Endothelial cell of umbilical vein (primary cell): ENCODE measurements at regions of chr12 and their contacts with region 1.

Region 1: DNA sequence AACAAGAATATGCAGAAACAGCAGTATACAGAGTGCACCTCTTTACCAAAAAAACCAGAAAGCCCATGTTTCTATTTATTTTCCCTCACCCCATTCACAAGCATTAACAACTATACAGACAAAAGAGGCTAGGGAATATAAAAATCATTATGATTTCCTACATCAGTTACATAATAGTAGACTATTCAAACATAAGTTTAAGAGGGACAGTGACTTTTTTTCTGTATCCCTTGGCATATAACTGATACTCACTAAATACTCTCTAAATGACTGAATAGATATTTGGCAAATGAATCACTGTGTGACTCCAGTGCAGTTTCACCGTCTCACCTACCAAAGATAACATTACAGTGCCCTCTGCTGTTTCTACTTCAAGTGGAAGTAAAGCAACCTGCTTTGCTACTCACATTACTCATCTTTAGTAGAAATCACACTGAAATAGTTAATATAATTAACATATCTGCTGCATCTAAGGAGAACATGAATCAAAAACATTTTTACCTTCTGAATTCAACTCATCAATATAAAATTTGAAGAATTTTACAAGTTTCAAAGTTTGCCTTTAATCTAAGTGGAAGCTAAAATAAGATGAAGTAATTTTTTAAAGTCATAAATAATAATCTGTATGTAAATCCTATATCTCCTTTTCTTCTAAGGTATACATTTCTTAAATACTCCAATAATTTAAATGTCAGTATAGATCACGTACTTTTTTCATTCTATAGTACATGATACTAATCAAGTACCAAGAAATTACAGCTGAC is 103.8 kb downstream of the OSBPL8 start:
- DNase-seq: peak; percentile 82
- H3K4me3 ChIP-seq: no peak overlapping the region
- H3K27ac ChIP-seq: peak overlapping the region; percentile 48
- H3K4me1 ChIP-seq: peaks cover 9% of the 10 kb centered on the region
- H3K27me3 ChIP-seq: no peaks in the 10 kb centered on the region
- CTCF ChIP-seq: peak; percentile 48 to 54
- POLR2A ChIP-seq: no peak

Region 2: DNA sequence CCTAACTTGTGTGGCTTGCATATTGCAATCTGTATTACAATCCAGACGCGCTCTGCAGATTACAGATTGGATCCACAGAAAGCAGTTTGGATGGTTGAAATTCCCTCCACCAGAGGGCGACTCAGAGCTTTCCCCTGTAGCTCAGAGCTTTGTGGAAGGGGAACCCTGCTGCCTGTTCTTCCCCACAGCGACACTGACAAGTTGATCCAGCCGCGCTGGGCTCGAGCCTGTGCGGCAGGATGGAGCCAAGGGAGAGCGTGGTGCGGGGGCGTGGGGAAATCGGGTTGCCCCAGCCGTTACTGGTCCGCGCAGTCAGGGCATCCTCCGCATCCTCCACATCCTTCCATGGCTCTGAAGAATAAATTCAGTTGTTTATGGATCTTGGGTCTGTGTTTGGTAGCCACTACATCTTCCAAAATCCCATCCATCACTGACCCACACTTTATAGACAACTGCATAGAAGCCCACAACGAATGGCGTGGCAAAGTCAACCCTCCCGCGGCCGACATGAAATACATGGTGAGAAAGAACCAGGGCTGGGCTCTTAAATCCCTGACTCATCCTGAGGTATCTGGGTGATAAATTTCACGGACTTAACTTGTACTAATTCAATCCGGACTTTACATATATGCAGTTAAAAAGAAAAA is 1121.3 kb before region 1 on chr12 and contains the start of gene GLIPR1L1:
- CTCF ChIA-PET with region 1: interaction called, 11 read pairs
- POLR2A ChIA-PET with region 1: no interaction called
- dilution Hi-C with region 1: no loop called
- intact Hi-C with region 1: loop called (anchors 5 kb)
- DNase-seq: peak; percentile 88
- H3K4me3 ChIP-seq: peak within 1 kb of the TSS; percentile 20 to 58 (median 56)
- H3K27ac ChIP-seq: no peak within 1 kb of the TSS
- H3K4me1 ChIP-seq: peaks cover 10% of the 10 kb centered on the region
- H3K27me3 ChIP-seq: peaks cover 2 to 13% of the 10 kb centered on the region in 2 experiments
- CTCF ChIP-seq: peak; percentile 85 to 91
- POLR2A ChIP-seq: no peak
- total RNA-seq, gene GLIPR1L1: not detected in 2 replicates

Region 3: GRCh38 chr12:75505706-75506312 is 950.0 kb before region 1 on chr12:
- CTCF ChIA-PET with region 1: interaction called, 4 read pairs
- POLR2A ChIA-PET with region 1: no interaction called
- dilution Hi-C with region 1: no loop called
- intact Hi-C with region 1: loop called (anchors 5 kb)
- DNase-seq: peak; percentile 60
- H3K4me3 ChIP-seq: no peak overlapping the region
- H3K27ac ChIP-seq: no peak overlapping the region
- H3K4me1 ChIP-seq: peaks cover 8% of the 10 kb centered on the region
- H3K27me3 ChIP-seq: no peaks in the 10 kb centered on the region
- CTCF ChIP-seq: peak; percentile 32 to 50
- POLR2A ChIP-seq: peak; percentile 38

Region 4: GRCh38 chr12:75722714-75723200 is 733.0 kb before region 1 on chr12:
- CTCF ChIA-PET with region 1: no interaction called
- POLR2A ChIA-PET with region 1: no interaction called
- dilution Hi-C with region 1: no loop called
- intact Hi-C with region 1: loop called (anchors 10 kb)
- DNase-seq: peak; percentile 95
- H3K4me3 ChIP-seq: no peak overlapping the region
- H3K27ac ChIP-seq: peak overlapping the region; percentile 92
- H3K4me1 ChIP-seq: peaks cover 46% of the 10 kb centered on the region
- H3K27me3 ChIP-seq: no peaks in the 10 kb centered on the region
- CTCF ChIP-seq: no peak
- POLR2A ChIP-seq: no peak

Region 5: DNA sequence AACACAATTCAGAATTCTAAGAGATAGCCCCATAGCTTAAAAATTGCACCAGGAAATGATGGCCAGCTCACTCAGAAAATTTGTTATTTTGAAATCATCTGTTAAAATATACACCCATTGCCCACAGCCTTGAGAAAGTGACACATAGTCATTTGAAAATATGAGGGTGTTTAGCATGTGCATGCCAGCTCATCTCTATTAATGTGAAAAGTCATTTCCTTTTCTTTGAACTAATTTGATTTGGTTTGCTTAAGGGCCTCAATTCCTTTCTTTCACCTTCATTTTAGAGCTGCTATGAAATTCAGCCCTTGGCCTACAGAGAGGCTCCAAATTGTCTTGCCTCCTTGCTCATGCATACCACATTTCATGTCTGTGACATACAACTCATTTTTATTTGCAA is 665.5 kb before region 1 on chr12:
- CTCF ChIA-PET with region 1: no interaction called
- POLR2A ChIA-PET with region 1: no interaction called
- dilution Hi-C with region 1: no loop called
- intact Hi-C with region 1: no loop called
- DNase-seq: no peak
- H3K4me3 ChIP-seq: no peak overlapping the region
- H3K27ac ChIP-seq: no peak overlapping the region
- H3K4me1 ChIP-seq: no peaks in the 10 kb centered on the region
- H3K27me3 ChIP-seq: no peaks in the 10 kb centered on the region
- CTCF ChIP-seq: no peak
- POLR2A ChIP-seq: no peak

Region 6: DNA sequence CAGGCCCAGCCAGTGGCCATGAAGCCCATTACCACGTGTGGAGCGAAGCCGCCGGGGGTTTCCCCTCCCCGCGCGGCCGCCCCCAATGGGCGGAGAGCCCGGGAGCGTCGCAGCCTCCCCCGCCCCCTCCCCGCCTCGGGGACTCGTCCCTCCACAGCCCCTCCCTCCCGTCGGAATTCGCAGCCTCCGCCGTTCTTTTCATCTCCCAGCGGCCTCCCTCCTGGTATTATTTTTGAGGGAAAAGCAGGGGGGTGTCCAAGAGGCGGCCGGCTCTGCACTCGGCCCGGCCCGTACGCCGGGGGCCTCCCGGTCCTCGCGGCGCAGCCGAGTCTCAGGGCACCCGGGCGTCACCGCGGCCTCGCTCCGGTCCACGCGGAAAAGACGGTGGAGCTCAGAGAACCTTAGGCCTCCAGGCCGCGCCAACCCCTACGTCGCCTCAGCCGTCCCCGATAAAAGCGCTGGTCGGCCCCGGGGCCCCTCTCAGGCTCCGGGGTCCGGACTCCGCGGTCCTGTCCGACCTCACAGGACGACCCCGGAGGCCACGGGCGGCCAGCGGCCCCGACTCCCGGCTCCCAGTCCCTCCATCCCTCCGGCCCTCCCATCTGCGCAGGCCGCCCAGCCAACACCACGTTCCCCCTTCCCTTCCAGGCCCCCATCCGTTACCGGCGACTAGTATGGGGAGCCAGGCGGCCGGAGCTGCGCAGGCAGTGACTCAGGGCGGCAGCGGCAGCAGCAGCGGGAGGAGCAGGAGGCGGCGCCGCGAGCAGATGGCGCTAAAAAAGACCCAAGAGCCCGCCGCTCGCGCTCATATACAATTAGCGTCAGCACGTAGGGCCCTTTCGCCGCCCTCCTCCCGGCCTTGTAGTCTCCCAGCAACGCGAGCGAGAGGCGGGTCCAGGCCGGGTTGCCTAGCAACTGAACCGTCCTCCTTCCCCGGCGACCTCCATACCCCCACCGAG is 371.6 kb before region 1 on chr12 and contains the start of gene NAP1L1:
- CTCF ChIA-PET with region 1: interaction called, 13 read pairs
- POLR2A ChIA-PET with region 1: interaction called, 3 read pairs
- dilution Hi-C with region 1: no loop called
- intact Hi-C with region 1: loop called (anchors 1 kb)
- DNase-seq: peak; percentile 97
- H3K4me3 ChIP-seq: peak within 1 kb of the TSS; percentile 76 to 99 (median 93)
- H3K27ac ChIP-seq: peak within 1 kb of the TSS; percentile 92
- H3K4me1 ChIP-seq: peaks cover 38% of the 10 kb centered on the region
- H3K27me3 ChIP-seq: no peaks in the 10 kb centered on the region
- CTCF ChIP-seq: peak in 1 of 2 donors; percentile 7
- POLR2A ChIP-seq: peak; percentile 87
- total RNA-seq, gene NAP1L1: 649 and 665 TPM in 2 replicates

Region 7: DNA sequence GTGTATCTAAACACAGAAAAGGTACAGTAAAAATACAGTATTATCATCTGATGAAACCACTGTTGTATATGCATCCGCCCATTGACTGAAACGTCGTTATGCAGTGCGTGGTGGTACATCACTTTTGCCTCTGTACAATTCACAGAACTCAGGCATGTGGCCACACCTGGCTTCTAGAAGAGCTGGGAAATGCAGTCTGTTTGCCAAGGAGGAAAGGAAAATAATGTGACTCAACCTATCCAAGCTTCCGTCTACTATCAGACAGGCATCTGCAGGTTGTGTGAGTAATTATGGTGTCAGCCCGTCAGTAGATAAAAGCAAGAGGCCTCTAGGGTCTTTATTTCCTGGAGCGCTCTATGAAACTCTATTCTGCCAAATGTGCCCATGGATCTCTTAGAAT is 219.2 kb before region 1 on chr12:
- CTCF ChIA-PET with region 1: no interaction called
- POLR2A ChIA-PET with region 1: no interaction called
- dilution Hi-C with region 1: no loop called
- intact Hi-C with region 1: loop called (anchors 10 kb)
- DNase-seq: peak; percentile 82
- H3K4me3 ChIP-seq: no peak overlapping the region
- H3K27ac ChIP-seq: peak overlapping the region; percentile 72
- H3K4me1 ChIP-seq: peaks cover 17% of the 10 kb centered on the region
- H3K27me3 ChIP-seq: no peaks in the 10 kb centered on the region
- CTCF ChIP-seq: no peak
- POLR2A ChIP-seq: peak; percentile 55

Region 8: GRCh38 chr12:76247026-76247646 is 208.6 kb before region 1 on chr12:
- CTCF ChIA-PET with region 1: no interaction called
- POLR2A ChIA-PET with region 1: no interaction called
- dilution Hi-C with region 1: no loop called
- intact Hi-C with region 1: no loop called
- DNase-seq: no peak
- H3K4me3 ChIP-seq: no peak overlapping the region
- H3K27ac ChIP-seq: no peak overlapping the region
- H3K4me1 ChIP-seq: no peaks in the 10 kb centered on the region
- H3K27me3 ChIP-seq: no peaks in the 10 kb centered on the region
- CTCF ChIP-seq: no peak
- POLR2A ChIP-seq: no peak

Region 9: GRCh38 chr12:76559400-76560085 is 103.8 kb after region 1 on chr12 and contains the start of gene OSBPL8:
- CTCF ChIA-PET with region 1: interaction called, 11 read pairs
- POLR2A ChIA-PET with region 1: no interaction called
- dilution Hi-C with region 1: no loop called
- intact Hi-C with region 1: no loop called
- DNase-seq: peak; percentile 95
- H3K4me3 ChIP-seq: peak within 1 kb of the TSS; percentile 83 to 95 (median 88)
- H3K27ac ChIP-seq: peak within 1 kb of the TSS; percentile 84
- H3K4me1 ChIP-seq: peaks cover 27% of the 10 kb centered on the region
- H3K27me3 ChIP-seq: no peaks in the 10 kb centered on the region
- CTCF ChIP-seq: no peak
- POLR2A ChIP-seq: peak; percentile 91
- total RNA-seq, gene OSBPL8: 47.6 and 53.9 TPM in 2 replicates